PC-9 (cell line): ENCODE measurements at regions of chr7 and their contacts with region 1.

Region 1: GRCh38 chr7:191981-192649 is at the start of gene FAM20C:
- DNase-seq: peak; percentile 55 to 83
- H3K4me3 ChIP-seq: peak within 1 kb of the TSS; percentile 59; the same call in 1 of the 2 replicates
- H3K27ac ChIP-seq: no peak within 1 kb of the TSS
- H3K4me1 ChIP-seq: peaks cover 22% of the 10 kb centered on the region
- H3K27me3 ChIP-seq: no peaks in the 10 kb centered on the region
- CTCF ChIP-seq: no peak
- total RNA-seq, gene FAM20C: 31.0 and 34.0 TPM in 2 replicates

Region 2: DNA sequence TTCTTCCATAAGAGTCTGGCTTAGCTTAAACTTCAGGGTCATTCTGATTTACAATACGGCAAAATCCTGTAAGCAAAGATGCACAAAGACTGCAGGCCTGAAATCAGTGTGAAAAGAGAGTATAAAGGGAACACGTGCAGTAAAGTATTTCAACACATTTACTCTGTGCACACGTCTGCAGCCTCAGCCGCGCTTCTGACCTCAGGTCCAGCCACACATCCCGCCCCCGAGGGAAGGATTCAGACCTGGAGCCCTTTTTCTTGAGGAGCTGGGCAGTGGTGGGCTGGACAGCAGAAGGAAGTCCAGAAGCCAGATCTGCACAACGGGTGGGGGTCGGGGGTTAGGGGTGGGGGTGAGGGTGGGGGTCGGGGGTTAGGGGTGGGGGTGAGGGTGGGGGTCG is 58.6 kb before region 1 on chr7:
- CTCF ChIA-PET with region 1: no interaction called
- POLR2A ChIA-PET with region 1: no interaction called
- intact Hi-C with region 1: no loop called
- DNase-seq: no peak
- H3K4me3 ChIP-seq: no peak overlapping the region
- H3K27ac ChIP-seq: no peak overlapping the region
- H3K4me1 ChIP-seq: no peaks in the 10 kb centered on the region
- H3K27me3 ChIP-seq: 0 out of 2 replicates have a peak, but pooled peaks cover 3% of the 10 kb centered on the region
- CTCF ChIP-seq: no peak

Region 3: DNA sequence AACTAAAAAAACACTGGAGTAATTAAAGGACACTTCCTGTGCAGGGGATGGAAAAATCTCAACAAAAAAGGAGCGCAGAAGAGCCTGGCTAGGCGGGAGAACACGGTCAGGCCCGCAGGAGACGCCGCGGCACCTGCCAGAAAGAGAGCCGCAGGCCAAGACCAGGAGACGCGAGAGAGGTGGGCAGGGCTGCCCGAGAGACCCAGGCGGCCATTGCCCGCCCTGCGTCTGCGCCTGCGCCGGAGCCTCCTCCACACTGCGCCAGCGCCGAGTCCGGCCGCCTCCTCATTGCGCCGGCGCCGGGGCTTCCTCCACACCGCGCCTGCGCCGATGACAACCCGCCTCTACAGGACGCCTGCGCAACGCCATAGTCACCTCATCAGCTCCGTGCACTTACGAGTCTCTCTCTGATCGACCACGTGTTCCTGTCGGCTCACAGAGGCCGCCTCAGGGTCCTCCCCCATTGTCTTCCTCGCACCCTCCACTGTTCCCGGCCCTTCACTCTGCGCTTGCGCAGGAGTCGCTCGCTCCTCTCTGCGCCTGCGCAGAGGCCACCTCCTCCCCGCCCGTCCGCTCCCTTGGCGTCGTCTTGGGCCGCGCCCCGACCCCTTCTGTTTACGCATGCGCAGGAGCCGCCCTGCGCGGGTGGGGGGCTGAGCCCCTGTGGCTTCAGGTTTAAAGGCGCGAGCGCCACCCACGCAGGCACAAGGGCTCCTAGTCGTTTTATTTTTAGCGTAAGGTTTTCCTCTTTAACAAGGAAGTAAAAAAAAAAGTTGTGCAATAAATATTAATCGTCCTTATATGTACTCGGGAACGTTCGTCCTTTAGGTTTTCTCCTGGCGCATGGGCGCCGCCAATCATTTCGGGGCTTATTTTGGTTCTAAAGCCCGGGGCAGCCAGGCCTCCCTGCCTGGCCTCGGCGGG is 42.9 kb before region 1 on chr7:
- CTCF ChIA-PET with region 1: interaction called, 3 read pairs
- POLR2A ChIA-PET with region 1: interaction called, 8 read pairs
- intact Hi-C with region 1: loop called (anchors 1 kb)
- DNase-seq: peak; percentile 97 to 99
- H3K4me3 ChIP-seq: peak overlapping the region; percentile 57
- H3K27ac ChIP-seq: peak overlapping the region; percentile 92
- H3K4me1 ChIP-seq: peaks cover 23% of the 10 kb centered on the region
- H3K27me3 ChIP-seq: no peaks in the 10 kb centered on the region
- CTCF ChIP-seq: no peak

Region 4: DNA sequence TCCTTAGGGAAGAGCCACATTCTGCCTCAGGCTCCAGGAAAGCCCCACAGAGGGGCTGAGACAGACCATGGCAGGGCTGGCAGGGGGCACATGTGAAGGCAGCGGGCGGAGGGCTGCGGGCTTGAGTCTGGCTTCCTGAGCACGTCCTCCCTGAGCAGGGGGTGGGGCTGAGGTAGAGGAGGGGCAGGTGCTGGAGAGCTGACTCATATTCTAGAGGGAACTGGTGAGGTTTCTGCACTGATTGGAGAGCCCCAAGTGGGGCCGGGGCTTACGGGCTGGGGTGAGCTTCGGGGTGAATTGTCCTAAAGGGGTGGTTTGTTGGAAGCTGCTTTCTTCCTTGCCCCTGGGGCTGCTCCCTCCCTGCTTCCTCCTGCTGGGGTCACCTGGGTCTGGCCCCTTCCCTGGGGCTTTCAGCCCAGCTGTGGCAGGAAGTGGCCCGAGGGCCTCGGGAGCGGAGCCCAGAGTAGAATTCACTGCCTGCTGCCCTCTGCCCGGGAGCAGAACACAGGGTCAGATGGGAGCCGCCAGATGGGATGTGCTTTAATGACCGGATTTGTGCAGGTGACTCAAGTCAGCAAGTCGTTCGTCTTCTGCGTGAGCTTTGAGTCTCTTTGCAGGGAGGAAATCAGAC is 48.8 kb after region 1 on chr7:
- CTCF ChIA-PET with region 1: interaction called, 3 read pairs
- POLR2A ChIA-PET with region 1: interaction called, 7 read pairs
- intact Hi-C with region 1: loop called (anchors 5 kb)
- DNase-seq: peak; percentile 88 to 96
- H3K4me3 ChIP-seq: peak overlapping the region; percentile 20; the same call in 1 of the 2 replicates
- H3K27ac ChIP-seq: peak overlapping the region; percentile 75
- H3K4me1 ChIP-seq: peaks cover 35% of the 10 kb centered on the region
- H3K27me3 ChIP-seq: no peaks in the 10 kb centered on the region
- CTCF ChIP-seq: no peak

Region 5: DNA sequence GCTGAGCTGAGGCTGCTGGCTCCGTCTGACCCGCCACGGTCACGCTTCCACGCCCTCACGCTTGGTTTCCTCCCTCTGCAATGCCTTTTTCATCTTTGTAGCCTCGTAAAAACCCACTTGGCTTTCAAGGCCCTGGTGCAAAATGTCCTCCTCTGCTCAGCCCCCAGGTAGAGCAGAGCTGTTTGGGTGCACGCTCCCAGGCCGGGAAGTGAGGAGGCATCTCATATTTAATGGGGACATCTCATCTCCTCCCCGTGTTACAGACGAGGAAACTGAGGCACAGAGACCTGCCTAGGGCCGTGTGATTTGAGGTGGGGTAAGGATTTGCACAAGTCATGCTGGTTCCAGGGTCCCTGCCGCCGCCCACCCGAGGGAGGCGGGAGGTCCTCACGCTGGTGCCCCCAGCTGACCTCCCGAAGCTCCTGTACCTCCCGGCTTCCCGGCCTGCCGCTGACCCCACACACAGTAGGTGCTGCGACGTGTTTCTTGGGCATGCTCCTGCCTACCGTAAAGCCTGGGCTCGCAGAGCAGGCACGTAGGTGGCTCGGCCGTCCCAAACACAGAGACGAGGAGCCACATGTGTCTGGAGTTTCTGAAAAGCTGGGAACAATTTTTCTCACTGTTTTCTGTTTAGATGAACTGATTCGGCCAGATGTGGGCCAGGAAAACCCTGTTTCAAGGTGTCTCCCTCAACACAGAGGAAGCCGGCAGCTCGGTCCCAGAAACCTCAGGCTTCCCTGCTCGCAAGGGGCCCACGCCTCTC is 109.4 kb after region 1 on chr7:
- CTCF ChIA-PET with region 1: no interaction called
- POLR2A ChIA-PET with region 1: interaction called, 11 read pairs
- intact Hi-C with region 1: no loop called
- DNase-seq: no peak
- H3K4me3 ChIP-seq: no peak overlapping the region
- H3K27ac ChIP-seq: no peak overlapping the region
- H3K4me1 ChIP-seq: no peaks in the 10 kb centered on the region
- H3K27me3 ChIP-seq: peaks cover 58% of the 10 kb centered on the region
- CTCF ChIP-seq: no peak

Region 6: GRCh38 chr7:732094-732541 is 540.0 kb after region 1 on chr7:
- CTCF ChIA-PET with region 1: no interaction called
- POLR2A ChIA-PET with region 1: interaction called, 30 read pairs
- intact Hi-C with region 1: no loop called
- DNase-seq: peak; percentile 83 to 87
- H3K4me3 ChIP-seq: no peak overlapping the region
- H3K27ac ChIP-seq: peak overlapping the region; percentile 35; the same call in 1 of the 2 replicates
- H3K4me1 ChIP-seq: peaks cover 23% of the 10 kb centered on the region
- H3K27me3 ChIP-seq: no peaks in the 10 kb centered on the region
- CTCF ChIP-seq: peak; percentile 48; the same call in 1 of the 2 replicates

Region 7: DNA sequence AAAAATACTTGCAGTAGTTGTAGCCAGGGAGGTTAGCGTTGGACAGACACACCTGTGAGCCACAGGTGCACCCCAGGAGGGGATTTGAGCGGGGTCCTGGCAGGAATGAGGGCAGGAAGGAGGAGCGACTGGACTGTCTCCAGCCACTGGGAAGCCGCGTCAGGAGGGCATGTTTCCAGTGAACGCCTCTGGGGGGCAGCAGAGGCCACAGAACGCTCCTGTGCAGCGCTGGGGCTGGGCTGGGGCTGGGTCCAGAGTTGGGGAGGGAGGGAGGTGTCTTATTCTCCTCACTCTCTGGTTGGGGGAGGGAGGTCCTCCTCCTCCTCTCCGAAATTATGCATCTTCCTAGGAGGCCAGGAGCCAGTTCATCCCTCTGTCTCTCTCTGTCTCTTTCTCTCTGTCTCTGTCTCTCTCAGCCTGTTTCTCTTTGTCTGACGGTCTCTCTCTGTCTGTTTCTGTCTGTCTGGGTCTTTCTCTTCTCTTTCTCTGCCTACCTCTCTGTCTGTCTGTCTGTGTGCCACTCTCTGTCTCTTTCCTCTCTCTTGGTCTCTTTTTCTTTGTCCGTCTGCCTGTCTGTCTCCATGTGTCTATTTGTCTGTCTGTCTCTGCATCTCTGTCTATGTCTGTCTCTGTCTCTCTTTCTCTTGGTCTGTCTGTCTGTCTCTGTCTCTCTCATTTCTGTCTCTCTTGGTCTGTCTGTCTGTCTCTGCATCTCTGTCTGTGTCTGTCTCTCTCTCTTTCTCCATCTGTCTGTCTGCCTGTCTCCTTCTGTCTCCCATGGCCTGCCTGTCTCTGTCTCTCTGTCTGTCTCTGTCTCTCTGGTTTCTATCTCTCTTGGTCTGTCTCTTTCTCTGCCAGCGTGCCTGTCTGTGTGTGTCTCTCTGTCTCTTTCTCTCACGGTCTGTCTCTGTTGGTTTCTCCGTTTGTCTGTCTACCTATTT is 1387.6 kb after region 1 on chr7:
- CTCF ChIA-PET with region 1: no interaction called
- POLR2A ChIA-PET with region 1: interaction called, 11 read pairs
- intact Hi-C with region 1: no loop called
- DNase-seq: peak in 1 of 2 experiments; percentile 78
- H3K4me3 ChIP-seq: no peak overlapping the region
- H3K27ac ChIP-seq: no peak overlapping the region
- H3K4me1 ChIP-seq: no peaks in the 10 kb centered on the region
- H3K27me3 ChIP-seq: peaks cover 8% of the 10 kb centered on the region
- CTCF ChIP-seq: peak; percentile 92